PC-3 (cell line): ENCODE measurements at regions of chr5 and their contacts with region 1.

Region 1: GRCh38 chr5:115496936-115497576 is 47.5 kb downstream of the FEM1C start:
- DNase-seq: no peak
- ATAC-seq: no peak
- H3K4me3 ChIP-seq: no peak overlapping the region
- H3K27ac ChIP-seq: no peak overlapping the region
- H3K4me1 ChIP-seq: no peaks in the 10 kb centered on the region
- H3K27me3 ChIP-seq: no peaks in the 10 kb centered on the region
- CTCF ChIP-seq: no peak

Region 2: DNA sequence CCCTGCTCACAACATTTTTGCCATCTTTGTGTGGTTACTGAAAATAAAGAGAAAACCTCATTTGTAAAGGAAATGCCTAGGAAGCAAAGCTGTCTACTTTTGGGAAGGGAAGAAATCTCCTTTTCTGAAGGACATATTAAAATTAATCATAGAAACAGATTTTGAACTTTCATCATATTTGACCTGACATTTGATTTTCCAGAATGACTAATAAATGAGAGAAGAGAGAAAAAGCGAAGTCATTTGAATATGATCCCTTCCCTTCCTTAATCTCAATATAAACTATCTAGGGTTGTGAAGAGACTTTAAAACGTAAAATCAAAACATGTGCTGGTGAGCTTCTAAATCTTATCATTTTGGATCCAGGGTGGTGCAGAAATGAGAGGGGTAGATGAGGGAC is 18.8 kb before region 1 on chr5:
- CTCF ChIA-PET with region 1: no interaction called
- POLR2A ChIA-PET with region 1: no interaction called
- intact Hi-C with region 1: loop called (anchors 2 kb)
- DNase-seq: no peak
- ATAC-seq: no peak
- H3K4me3 ChIP-seq: no peak overlapping the region
- H3K27ac ChIP-seq: no peak overlapping the region
- H3K4me1 ChIP-seq: no peaks in the 10 kb centered on the region
- H3K27me3 ChIP-seq: no peaks in the 10 kb centered on the region
- CTCF ChIP-seq: no peak

Region 3: DNA sequence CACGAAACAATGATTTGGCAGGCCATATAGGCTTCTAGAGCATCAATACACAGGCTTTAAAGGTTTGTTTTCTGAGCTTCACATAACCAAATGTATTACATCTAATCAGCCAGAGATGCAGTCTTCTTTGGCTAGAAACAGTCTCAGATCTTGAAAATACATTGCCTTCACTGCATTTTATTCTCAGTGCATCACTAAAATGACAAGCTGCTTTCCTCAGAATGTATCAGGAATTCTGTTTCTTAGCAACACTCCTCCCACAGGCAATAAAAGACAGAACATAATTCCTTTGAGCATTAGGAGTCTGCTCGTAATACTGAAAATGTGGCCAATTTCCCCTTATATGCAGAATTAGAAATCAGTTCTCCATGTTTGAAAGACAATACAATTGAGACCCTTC is 10.6 kb after region 1 on chr5:
- CTCF ChIA-PET with region 1: no interaction called
- POLR2A ChIA-PET with region 1: interaction called, 17 read pairs
- intact Hi-C with region 1: no loop called
- DNase-seq: peak; percentile 8
- ATAC-seq: peak; percentile 9; the same call in 1 of the 2 replicates
- H3K4me3 ChIP-seq: no peak overlapping the region
- H3K27ac ChIP-seq: no peak overlapping the region
- H3K4me1 ChIP-seq: peaks cover 11% of the 10 kb centered on the region
- H3K27me3 ChIP-seq: no peaks in the 10 kb centered on the region
- CTCF ChIP-seq: no peak